Activated CD8-positive, alpha-beta memory T cell treated with anti-CD3 and anti-CD28 coated beads, Interleukin-2, amount 10 ng/mL, durations not matched to agents 7 days and 5 days (primary cell): ENCODE measurements at regions of chr1 and their contacts with region 1.

Region 1: GRCh38 chr1:26363549-26364448 is 8.8 kb downstream of the ZNF683 start:
- DNase-seq: peak; percentile 90
- ATAC-seq: peak; percentile 76
- H3K4me3 Mint-ChIP-seq: peak overlapping the region; percentile 7
- H3K27ac Mint-ChIP-seq: peak overlapping the region; percentile 72
- H3K4me1 Mint-ChIP-seq: peaks cover 53% of the 10 kb centered on the region
- H3K27me3 Mint-ChIP-seq: peaks cover 23% of the 10 kb centered on the region

Region 2: DNA sequence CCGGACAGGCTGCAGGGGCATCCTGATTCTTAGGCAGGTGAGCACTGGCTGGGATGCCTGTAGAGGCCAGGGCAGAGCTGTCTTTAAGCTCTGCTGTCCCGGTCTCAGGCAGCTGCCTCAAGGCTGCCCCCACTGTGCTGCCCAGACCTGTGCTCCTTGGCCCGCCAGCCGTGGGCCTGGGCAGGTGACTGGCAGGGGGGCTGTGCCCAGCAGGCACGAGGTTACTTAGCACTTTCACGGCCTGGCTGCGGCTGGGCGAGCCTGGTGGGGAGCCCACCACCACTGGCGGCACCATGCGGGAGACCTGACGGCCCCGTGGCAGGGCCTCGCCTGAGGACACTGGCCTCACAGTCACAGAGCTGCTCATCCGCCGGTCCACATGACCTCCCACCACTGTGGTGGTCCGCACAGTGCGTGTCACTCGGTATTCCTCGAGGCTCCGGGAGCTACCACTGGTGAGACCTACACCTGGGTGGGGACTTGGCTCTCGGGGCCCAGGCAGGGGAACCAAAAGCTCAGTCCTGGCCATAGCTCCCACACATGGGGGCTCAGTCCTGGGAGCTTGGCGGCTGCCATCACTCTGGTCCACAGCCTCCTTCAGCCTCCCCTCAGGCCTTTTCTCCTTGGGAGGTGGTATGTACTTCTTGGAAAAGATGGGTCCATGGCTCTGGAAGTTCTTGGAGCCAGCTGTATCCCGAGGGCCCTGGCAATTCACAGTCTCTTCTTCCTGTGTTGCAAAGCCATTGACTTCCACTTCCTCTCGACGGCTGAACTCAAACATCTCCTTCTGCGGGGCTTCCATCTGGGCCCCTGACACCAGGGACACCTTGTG is 17.9 kb before region 1 on chr1:
- CTCF ChIA-PET with region 1: interaction called, 19 read pairs
- DNase-seq: no peak
- ATAC-seq: no peak
- H3K4me3 Mint-ChIP-seq: no peak overlapping the region
- H3K27ac Mint-ChIP-seq: no peak overlapping the region
- H3K4me1 Mint-ChIP-seq: no peaks in the 10 kb centered on the region
- H3K27me3 Mint-ChIP-seq: peaks cover 6% of the 10 kb centered on the region

Region 3: DNA sequence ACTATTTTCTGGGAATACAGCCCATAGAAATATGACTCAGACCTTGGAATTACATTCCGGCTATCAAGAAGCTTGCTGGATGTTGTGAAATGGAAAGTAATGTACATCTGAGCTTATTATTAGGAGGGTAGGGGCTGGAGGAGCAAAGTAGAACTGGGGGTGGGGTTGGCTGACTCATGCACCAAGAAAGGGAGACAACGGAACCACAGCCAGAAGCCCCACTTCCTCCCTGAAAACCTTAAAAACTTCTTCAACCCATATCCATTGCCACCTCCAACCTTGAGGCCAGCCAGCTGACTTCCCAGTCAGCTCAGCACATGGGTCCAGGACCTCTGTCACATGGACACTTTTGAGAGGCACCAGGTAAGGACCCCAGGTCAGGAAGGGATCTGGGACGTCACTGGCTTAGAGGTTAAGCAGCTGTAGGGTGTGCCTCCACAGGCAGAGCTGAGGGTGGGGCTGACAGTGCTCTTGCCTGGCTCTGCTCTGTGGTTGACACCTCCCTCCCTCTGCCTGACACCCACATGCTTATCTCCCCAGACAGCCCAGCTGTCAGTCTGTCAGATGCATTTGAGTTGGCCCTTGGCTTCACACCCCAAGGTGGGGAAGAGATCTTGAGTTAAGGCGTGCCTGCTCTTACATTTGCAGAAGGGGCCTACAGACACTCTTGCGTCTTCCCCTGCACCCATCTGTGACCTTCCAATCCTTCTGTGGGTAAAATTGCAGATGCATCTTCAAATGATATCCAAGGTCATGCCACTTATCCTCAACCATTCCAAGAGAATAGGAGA is 14.5 kb after region 1 on chr1:
- CTCF ChIA-PET with region 1: interaction called, 142 read pairs
- DNase-seq: peak; percentile 96
- ATAC-seq: peak; percentile 96
- H3K4me3 Mint-ChIP-seq: peak overlapping the region; percentile 29
- H3K27ac Mint-ChIP-seq: peak overlapping the region; percentile 87
- H3K4me1 Mint-ChIP-seq: peaks cover 75% of the 10 kb centered on the region
- H3K27me3 Mint-ChIP-seq: peaks cover 2% of the 10 kb centered on the region

Region 4: GRCh38 chr1:26399034-26399433 is 35.2 kb after region 1 on chr1:
- CTCF ChIA-PET with region 1: interaction called, 14 read pairs
- DNase-seq: no peak
- ATAC-seq: no peak
- H3K4me3 Mint-ChIP-seq: no peak overlapping the region
- H3K27ac Mint-ChIP-seq: no peak overlapping the region
- H3K4me1 Mint-ChIP-seq: peaks cover 5% of the 10 kb centered on the region
- H3K27me3 Mint-ChIP-seq: peaks cover 20% of the 10 kb centered on the region

Region 5: GRCh38 chr1:26771643-26772321 is 408.0 kb after region 1 on chr1:
- CTCF ChIA-PET with region 1: no interaction called
- DNase-seq: no peak
- ATAC-seq: peak; percentile 33
- H3K4me3 Mint-ChIP-seq: no peak overlapping the region
- H3K27ac Mint-ChIP-seq: peak overlapping the region; percentile 2
- H3K4me1 Mint-ChIP-seq: peaks cover 20% of the 10 kb centered on the region
- H3K27me3 Mint-ChIP-seq: no peaks in the 10 kb centered on the region